Activated CD8-positive, alpha-beta memory T cell treated with anti-CD3 and anti-CD28 coated beads, Interleukin-2, amount 10 ng/mL, durations not matched to agents 7 days and 5 days (primary cell): ENCODE measurements at regions of chr4 and their contacts with region 1.

Region 1: GRCh38 chr4:77095101-77095821 is 19.5 kb upstream of the CCNI start:
- DNase-seq: peak; percentile 83
- ATAC-seq: peak; percentile 100
- H3K4me3 Mint-ChIP-seq: no peak overlapping the region
- H3K27ac Mint-ChIP-seq: no peak overlapping the region
- H3K4me1 Mint-ChIP-seq: peaks cover 11% of the 10 kb centered on the region
- H3K27me3 Mint-ChIP-seq: no peaks in the 10 kb centered on the region

Region 2: GRCh38 chr4:77072195-77072753 is 23.0 kb before region 1 on chr4:
- CTCF ChIA-PET with region 1: interaction called, 14 read pairs
- DNase-seq: no peak
- ATAC-seq: no peak
- H3K4me3 Mint-ChIP-seq: no peak overlapping the region
- H3K27ac Mint-ChIP-seq: no peak overlapping the region
- H3K4me1 Mint-ChIP-seq: peaks cover 42% of the 10 kb centered on the region
- H3K27me3 Mint-ChIP-seq: peaks cover 3% of the 10 kb centered on the region

Region 3: GRCh38 chr4:77193511-77194102 is 98.3 kb after region 1 on chr4:
- CTCF ChIA-PET with region 1: interaction called, 150 read pairs
- DNase-seq: peak; percentile 81
- ATAC-seq: peak; percentile 98
- H3K4me3 Mint-ChIP-seq: peak overlapping the region; percentile 68
- H3K27ac Mint-ChIP-seq: peak overlapping the region; percentile 82
- H3K4me1 Mint-ChIP-seq: peaks cover 18% of the 10 kb centered on the region
- H3K27me3 Mint-ChIP-seq: peaks cover 12% of the 10 kb centered on the region